ENCODE measurements at regions of chr3 and their contacts with region 1.

Region 1: DNA sequence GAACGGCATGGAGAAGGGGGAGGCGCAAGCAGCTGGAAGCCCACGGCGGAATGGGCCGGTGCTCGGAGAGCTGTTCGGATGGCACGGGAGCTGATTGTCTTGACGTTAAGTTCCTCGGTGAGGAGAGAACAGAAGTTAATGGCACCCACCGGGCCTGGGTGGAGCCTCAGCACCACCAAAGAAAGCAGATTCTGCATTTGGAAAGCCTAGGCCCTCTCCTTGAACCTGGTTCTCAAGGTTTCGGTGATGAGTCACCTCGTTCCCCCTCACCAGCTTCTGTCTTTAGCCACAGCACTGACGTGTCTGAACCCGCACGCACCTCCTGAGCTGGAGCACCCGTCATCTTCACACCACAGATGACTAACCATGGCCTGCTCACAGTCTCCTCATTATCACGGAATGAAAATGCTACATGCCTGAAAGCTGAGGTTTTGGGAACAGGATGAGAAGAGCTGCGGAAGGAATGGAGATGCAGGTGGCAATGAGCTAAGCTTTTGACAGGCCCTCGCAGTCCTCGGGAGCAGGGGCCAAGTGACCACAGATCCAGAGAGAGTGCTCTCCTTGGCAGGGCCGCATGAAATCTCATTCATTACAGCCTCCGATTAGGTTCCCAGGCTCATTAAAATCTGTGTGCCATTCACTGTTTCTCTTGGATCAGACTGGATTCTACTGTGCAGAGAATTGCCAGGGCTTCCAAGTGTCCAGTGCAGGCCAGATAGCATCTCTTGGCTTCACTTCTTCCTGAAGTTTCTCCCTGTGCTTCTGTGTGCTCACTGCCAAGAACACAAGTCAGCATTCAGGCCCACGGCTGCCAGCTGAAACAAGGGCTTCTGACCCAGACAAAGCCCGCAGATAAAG is 96.3 kb upstream of the DLG1 start:
- DNase-seq: peak; percentile 100
- H3K4me3 Mint-ChIP-seq: peak overlapping the region; percentile 45
- H3K27ac Mint-ChIP-seq: peak overlapping the region; percentile 97
- H3K4me1 Mint-ChIP-seq: peaks cover 24% of the 10 kb centered on the region
- H3K27me3 Mint-ChIP-seq: no peaks in the 10 kb centered on the region
- CTCF ChIP-seq: no peak

Region 2: GRCh38 chr3:197104736-197105135 is 290.0 kb before region 1 on chr3:
- CTCF ChIA-PET with region 1: no interaction called
- POLR2A ChIA-PET with region 1: no interaction called
- intact Hi-C with region 1: no loop called
- DNase-seq: peak; percentile 5
- H3K4me3 Mint-ChIP-seq: no peak overlapping the region
- H3K27ac Mint-ChIP-seq: no peak overlapping the region
- H3K4me1 Mint-ChIP-seq: no peaks in the 10 kb centered on the region
- H3K27me3 Mint-ChIP-seq: no peaks in the 10 kb centered on the region
- CTCF ChIP-seq: no peak

Region 3: GRCh38 chr3:197203714-197204146 is 191.0 kb before region 1 on chr3:
- CTCF ChIA-PET with region 1: no interaction called
- POLR2A ChIA-PET with region 1: no interaction called
- intact Hi-C with region 1: no loop called
- DNase-seq: no peak
- H3K4me3 Mint-ChIP-seq: no peak overlapping the region
- H3K27ac Mint-ChIP-seq: no peak overlapping the region
- H3K4me1 Mint-ChIP-seq: peaks cover 16% of the 10 kb centered on the region
- H3K27me3 Mint-ChIP-seq: no peaks in the 10 kb centered on the region
- CTCF ChIP-seq: no peak

Region 4: GRCh38 chr3:197305854-197306253 is 88.8 kb before region 1 on chr3:
- CTCF ChIA-PET with region 1: no interaction called
- POLR2A ChIA-PET with region 1: interaction called, 15 read pairs
- intact Hi-C with region 1: no loop called
- DNase-seq: no peak
- H3K4me3 Mint-ChIP-seq: peak overlapping the region; percentile 27
- H3K27ac Mint-ChIP-seq: peak overlapping the region; percentile 20
- H3K4me1 Mint-ChIP-seq: peaks cover 30% of the 10 kb centered on the region
- H3K27me3 Mint-ChIP-seq: no peaks in the 10 kb centered on the region
- CTCF ChIP-seq: no peak

Region 5: DNA sequence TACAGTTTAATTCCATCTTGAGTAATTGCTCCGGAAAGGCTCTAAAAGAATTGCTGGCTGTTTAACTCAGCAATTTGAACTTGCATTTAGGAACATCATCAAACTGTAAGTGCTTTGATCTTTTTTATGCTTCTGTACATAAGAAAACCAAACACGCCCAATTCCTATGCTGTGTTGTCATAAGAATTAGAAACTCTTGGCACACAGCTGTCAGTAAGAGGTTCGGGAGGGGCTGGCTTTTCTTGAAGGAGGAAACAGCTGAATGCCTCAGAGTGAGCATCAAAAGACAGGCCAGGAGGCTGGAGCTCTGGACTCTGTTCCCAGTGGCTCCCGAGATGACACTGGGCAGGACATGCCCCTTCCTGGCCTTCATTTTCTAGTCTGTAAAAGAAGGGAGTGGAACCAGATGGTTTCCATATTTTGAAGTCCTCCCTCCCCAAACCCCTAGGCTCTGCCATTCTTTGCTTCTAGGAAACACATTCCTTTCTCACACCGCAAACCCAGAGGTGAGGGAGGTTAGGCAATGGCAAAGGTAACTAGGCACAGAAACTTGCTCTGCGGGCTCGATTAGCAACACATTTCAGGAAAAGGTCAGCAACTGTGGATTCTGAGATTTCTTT is 22.5 kb before region 1 on chr3:
- CTCF ChIA-PET with region 1: interaction called, 3 read pairs
- POLR2A ChIA-PET with region 1: interaction called, 39 read pairs
- intact Hi-C with region 1: loop called (anchors 2 kb)
- DNase-seq: peak; percentile 89
- H3K4me3 Mint-ChIP-seq: peak overlapping the region; percentile 19
- H3K27ac Mint-ChIP-seq: peak overlapping the region; percentile 75
- H3K4me1 Mint-ChIP-seq: peaks cover 44% of the 10 kb centered on the region
- H3K27me3 Mint-ChIP-seq: no peaks in the 10 kb centered on the region
- CTCF ChIP-seq: no peak

Region 6: GRCh38 chr3:197422506-197422905 is 27.8 kb after region 1 on chr3:
- CTCF ChIA-PET with region 1: interaction called, 6 read pairs
- POLR2A ChIA-PET with region 1: interaction called, 14 read pairs
- intact Hi-C with region 1: no loop called
- DNase-seq: no peak
- H3K4me3 Mint-ChIP-seq: no peak overlapping the region
- H3K27ac Mint-ChIP-seq: peak overlapping the region; percentile 75
- H3K4me1 Mint-ChIP-seq: peaks cover 13% of the 10 kb centered on the region
- H3K27me3 Mint-ChIP-seq: peaks cover 20% of the 10 kb centered on the region
- CTCF ChIP-seq: no peak

Measured in MCF 10A (cell line).